ENCODE measurements at regions of chr12 and their contacts with region 1.

Region 1: GRCh38 chr12:112602150-112602549 is 183.4 kb downstream of the PTPN11 start:
- DNase-seq: peak; percentile 59
- ATAC-seq: peak; percentile 88
- H3K4me3 Mint-ChIP-seq: 0 out of 2 replicates have a peak overlapping the region, but pooled peaks have one; percentile 4
- H3K27ac Mint-ChIP-seq: peak overlapping the region; percentile 93
- H3K4me1 Mint-ChIP-seq: peaks cover 30% of the 10 kb centered on the region
- H3K27me3 Mint-ChIP-seq: peaks cover 36% of the 10 kb centered on the region
- CTCF ChIP-seq: no peak

Region 2: DNA sequence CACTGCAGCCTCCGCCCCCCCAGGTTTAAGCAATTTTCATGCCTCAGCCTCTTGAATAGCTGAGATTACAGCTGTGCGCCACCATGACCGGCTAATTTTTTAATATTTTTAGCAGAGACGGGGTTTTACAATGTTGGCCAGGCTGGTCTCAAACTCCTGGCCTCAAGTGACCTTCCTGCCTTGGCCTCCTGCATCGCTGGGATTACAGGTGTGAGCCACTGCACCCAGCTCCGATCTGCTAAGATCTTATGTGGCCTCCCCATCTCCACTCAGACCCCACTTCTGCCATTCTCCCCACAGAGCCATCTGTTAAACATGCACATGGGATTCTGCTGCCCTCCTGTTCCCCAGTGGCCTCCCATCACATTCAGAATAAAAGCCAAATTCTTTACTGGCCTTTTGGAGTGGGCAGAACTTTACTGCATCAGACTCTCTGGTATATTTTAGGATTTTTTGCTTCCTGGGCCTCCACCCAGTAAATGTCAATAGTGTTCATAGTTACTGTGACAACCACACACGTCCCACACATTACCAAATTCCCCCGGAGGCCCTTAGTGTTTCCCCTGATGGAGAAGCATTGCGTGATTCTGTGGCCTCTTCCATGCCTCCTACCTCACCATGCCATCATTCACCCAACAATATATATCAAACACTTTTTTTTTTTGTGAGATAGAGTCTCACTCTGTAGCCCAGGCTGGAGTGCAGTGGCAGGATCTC is 87.1 kb before region 1 on chr12:
- CTCF ChIA-PET with region 1: no interaction called
- POLR2A ChIA-PET with region 1: no interaction called
- DNase-seq: no peak
- ATAC-seq: no peak
- H3K4me3 Mint-ChIP-seq: no peak overlapping the region
- H3K27ac Mint-ChIP-seq: no peak overlapping the region
- H3K4me1 Mint-ChIP-seq: peaks cover 3% of the 10 kb centered on the region; the same call in 1 of the 2 replicates
- H3K27me3 Mint-ChIP-seq: no peaks in the 10 kb centered on the region
- CTCF ChIP-seq: no peak

Region 3: GRCh38 chr12:112564162-112564784 is 37.9 kb before region 1 on chr12:
- CTCF ChIA-PET with region 1: no interaction called
- POLR2A ChIA-PET with region 1: no interaction called
- DNase-seq: peak; percentile 25
- ATAC-seq: no peak; the same call in 1 of the 2 replicates
- H3K4me3 Mint-ChIP-seq: no peak overlapping the region
- H3K27ac Mint-ChIP-seq: no peak overlapping the region
- H3K4me1 Mint-ChIP-seq: no peaks in the 10 kb centered on the region
- H3K27me3 Mint-ChIP-seq: peaks cover 7% of the 10 kb centered on the region
- CTCF ChIP-seq: peak; percentile 32; the same call in 1 of the 2 replicates

Region 4: GRCh38 chr12:112590281-112590680 is 11.9 kb before region 1 on chr12:
- CTCF ChIA-PET with region 1: no interaction called
- POLR2A ChIA-PET with region 1: no interaction called
- DNase-seq: peak; percentile 50
- ATAC-seq: peak; percentile 98
- H3K4me3 Mint-ChIP-seq: no peak overlapping the region
- H3K27ac Mint-ChIP-seq: no peak overlapping the region
- H3K4me1 Mint-ChIP-seq: peaks cover 18% of the 10 kb centered on the region
- H3K27me3 Mint-ChIP-seq: peaks cover 99% of the 10 kb centered on the region
- CTCF ChIP-seq: no peak

Region 5: GRCh38 chr12:112616469-112617152 is 14.5 kb after region 1 on chr12:
- CTCF ChIA-PET with region 1: interaction called, 10 read pairs
- POLR2A ChIA-PET with region 1: interaction called, 5 read pairs
- DNase-seq: peak; percentile 44
- ATAC-seq: peak; percentile 95
- H3K4me3 Mint-ChIP-seq: peak overlapping the region; percentile 58
- H3K27ac Mint-ChIP-seq: peak overlapping the region; percentile 94
- H3K4me1 Mint-ChIP-seq: peaks cover 43% of the 10 kb centered on the region
- H3K27me3 Mint-ChIP-seq: peaks cover 20% of the 10 kb centered on the region
- CTCF ChIP-seq: no peak

Measured in WTC11 (cell line).